Activated CD8-positive, alpha-beta T cell treated with anti-CD3 and anti-CD28 coated beads for 36 hours (primary cell): ENCODE measurements at regions of chr17 and their contacts with region 1.

Region 1: GRCh38 chr17:41665566-41666236 is 23.0 kb upstream of the EIF1 start:
- DNase-seq: peak; percentile 92
- ATAC-seq: peak; percentile 81
- H3K4me3 Mint-ChIP-seq: peak overlapping the region; percentile 81
- H3K27ac Mint-ChIP-seq: peak overlapping the region; percentile 100
- H3K4me1 Mint-ChIP-seq: peaks cover 33% of the 10 kb centered on the region
- H3K27me3 Mint-ChIP-seq: peaks cover 1% of the 10 kb centered on the region
- CTCF ChIP-seq: peak; percentile 95

Region 2: DNA sequence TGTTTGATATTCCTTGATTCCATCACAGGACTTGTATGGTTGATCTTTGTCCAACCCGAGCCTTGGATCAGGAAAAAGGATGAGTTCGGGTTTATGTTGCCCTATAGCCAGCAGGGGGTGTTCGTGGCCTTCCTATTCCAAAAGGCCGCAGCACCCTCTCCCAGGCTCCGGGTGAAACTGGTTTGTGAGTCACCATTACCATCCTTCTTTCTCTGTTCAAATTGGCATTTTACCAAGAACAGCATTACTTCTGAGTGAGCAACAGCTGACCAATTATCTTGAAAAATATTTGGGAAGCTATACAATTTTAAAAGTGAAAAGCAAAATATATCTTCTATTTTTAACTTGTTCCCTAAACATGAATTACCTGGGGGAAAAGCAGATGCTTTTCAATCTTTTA is 756.4 kb before region 1 on chr17:
- CTCF ChIA-PET with region 1: interaction called, 13 read pairs
- POLR2A ChIA-PET with region 1: no interaction called
- intact Hi-C with region 1: no loop called
- DNase-seq: peak; percentile 82
- ATAC-seq: peak; percentile 94
- H3K4me3 Mint-ChIP-seq: no peak overlapping the region
- H3K27ac Mint-ChIP-seq: no peak overlapping the region
- H3K4me1 Mint-ChIP-seq: no peaks in the 10 kb centered on the region
- H3K27me3 Mint-ChIP-seq: peaks cover 23% of the 10 kb centered on the region
- CTCF ChIP-seq: peak; percentile 80

Region 3: DNA sequence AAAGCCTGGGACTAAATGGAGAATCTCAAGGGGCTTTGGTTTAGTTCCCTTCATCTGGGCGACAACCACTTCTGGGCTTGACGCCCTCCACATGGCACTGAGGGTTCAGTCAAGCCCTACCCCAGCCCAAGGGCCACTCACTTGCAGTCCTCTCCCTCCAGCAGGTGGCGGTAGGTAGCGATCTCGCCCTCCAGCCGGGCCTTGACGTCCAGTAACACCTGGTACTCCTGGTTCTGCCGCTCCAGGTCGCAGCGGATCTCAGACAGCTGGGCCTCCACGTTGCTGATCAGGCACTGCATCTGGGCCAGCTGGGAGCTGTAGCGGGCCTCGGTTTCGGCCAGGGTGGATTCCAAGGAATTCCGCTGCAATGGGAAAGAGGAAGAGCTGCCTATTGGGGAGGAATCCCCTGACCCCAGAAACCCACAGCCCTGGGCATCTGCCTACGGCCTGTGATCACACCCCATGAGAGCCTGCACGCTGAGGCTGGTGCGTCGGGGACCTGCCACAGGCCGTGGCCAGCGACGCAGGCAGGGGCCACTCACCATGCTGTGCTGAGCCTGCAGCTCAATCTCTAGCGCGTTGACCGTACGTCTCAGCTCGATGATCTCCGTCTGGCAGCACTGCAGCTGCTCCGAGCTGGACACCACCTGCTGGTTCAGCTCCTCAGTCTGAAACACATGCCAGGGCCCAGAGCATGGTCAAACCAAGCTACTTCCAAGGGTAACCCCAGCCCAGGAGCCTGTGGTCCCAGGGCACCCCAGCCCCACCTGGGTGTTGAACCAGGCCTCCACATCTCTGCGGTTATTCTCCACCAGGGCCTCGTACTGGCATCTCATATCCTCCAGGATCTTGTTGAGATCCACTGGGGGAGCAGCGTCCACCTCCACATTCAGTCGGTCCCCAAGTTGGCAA is 178.6 kb before region 1 on chr17:
- CTCF ChIA-PET with region 1: interaction called, 14 read pairs
- POLR2A ChIA-PET with region 1: no interaction called
- intact Hi-C with region 1: no loop called
- DNase-seq: peak; percentile 61
- ATAC-seq: no peak
- H3K4me3 Mint-ChIP-seq: no peak overlapping the region
- H3K27ac Mint-ChIP-seq: no peak overlapping the region
- H3K4me1 Mint-ChIP-seq: peaks cover 2% of the 10 kb centered on the region
- H3K27me3 Mint-ChIP-seq: peaks cover 2% of the 10 kb centered on the region
- CTCF ChIP-seq: peak; percentile 56

Region 4: GRCh38 chr17:41688699-41689496 is 23.2 kb after region 1 on chr17 and contains the start of gene EIF1:
- CTCF ChIA-PET with region 1: interaction called, 117 read pairs
- POLR2A ChIA-PET with region 1: interaction called, 104 read pairs
- intact Hi-C with region 1: no loop called
- DNase-seq: peak; percentile 100
- ATAC-seq: peak; percentile 77
- H3K4me3 Mint-ChIP-seq: peak within 1 kb of the TSS; percentile 97
- H3K27ac Mint-ChIP-seq: peak within 1 kb of the TSS; percentile 93
- H3K4me1 Mint-ChIP-seq: peaks cover 26% of the 10 kb centered on the region
- H3K27me3 Mint-ChIP-seq: no peaks in the 10 kb centered on the region
- CTCF ChIP-seq: no peak
- total RNA-seq, gene EIF1: 924 to 930 TPM

Region 5: DNA sequence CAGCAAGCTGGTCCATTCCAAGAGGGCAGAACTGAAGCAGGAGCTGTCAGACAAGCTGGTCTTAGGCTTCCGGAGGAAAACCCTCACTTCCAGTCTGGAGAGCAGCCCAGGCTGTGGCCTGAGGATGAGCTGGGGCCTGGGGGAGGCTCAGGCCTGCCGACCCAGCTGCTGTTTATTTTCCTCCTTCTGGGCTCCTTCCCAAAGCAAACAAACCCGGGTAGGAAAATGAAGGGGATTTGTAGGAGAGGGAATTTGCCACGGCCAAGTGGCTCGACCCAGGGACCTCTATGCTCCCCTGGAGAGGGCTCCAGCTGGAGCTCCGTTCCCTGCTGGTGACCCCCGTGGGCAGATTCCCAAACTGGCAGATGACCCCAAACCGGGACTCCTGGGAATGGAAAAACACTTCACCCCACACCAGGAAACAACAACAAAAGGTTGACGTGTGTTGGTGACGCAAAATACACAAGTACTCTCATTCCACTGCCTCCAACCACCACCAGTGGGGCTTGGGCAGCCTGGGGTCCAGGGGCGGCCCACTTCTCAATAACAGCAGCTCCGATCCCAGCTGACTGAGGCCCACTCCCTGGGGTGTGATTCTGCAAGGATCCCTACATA is 112.0 kb after region 1 on chr17:
- CTCF ChIA-PET with region 1: no interaction called
- POLR2A ChIA-PET with region 1: no interaction called
- intact Hi-C with region 1: no loop called
- DNase-seq: no peak
- ATAC-seq: no peak
- H3K4me3 Mint-ChIP-seq: no peak overlapping the region
- H3K27ac Mint-ChIP-seq: no peak overlapping the region
- H3K4me1 Mint-ChIP-seq: no peaks in the 10 kb centered on the region
- H3K27me3 Mint-ChIP-seq: peaks cover 6% of the 10 kb centered on the region
- CTCF ChIP-seq: no peak